H1 (cell line): ENCODE measurements at regions of chr10 and their contacts with region 1.

Region 1: GRCh38 chr10:72692057-72692910 is at the start of gene MCU:
- DNase-seq: peak; percentile 79 to 90
- H3K4me3 ChIP-seq: peak within 1 kb of the TSS; percentile 83 to 96 (median 90)
- H3K27ac ChIP-seq: peak within 1 kb of the TSS; percentile 69; the same call in 1 of the 2 replicates
- H3K4me1 ChIP-seq: peaks cover 0 to 3% (median 0%) of the 10 kb centered on the region in 4 experiments; a peak in 2 of 7 replicates
- H3K27me3 ChIP-seq: no peaks in the 10 kb centered on the region
- CTCF ChIP-seq: no peak
- EP300 ChIP-seq: no peak
- POLR2A ChIP-seq: peak; percentile 86 to 90
- RAD21 ChIP-seq: no peak
- total RNA-seq, gene MCU: 45.9 and 51.6 TPM in 2 replicates

Region 2: GRCh38 chr10:72625608-72626443 is 66.5 kb before region 1 on chr10 and contains the start of gene MICU1:
- CTCF ChIA-PET with region 1: no interaction called
- POLR2A ChIA-PET with region 1: interaction called, 10 read pairs
- DNase-seq: peak; percentile 90 to 93
- H3K4me3 ChIP-seq: peak within 1 kb of the TSS; percentile 84 to 100 (median 94)
- H3K27ac ChIP-seq: peak within 1 kb of the TSS; percentile 57; the same call in 1 of the 2 replicates
- H3K4me1 ChIP-seq: no peaks in the 10 kb centered on the region
- H3K27me3 ChIP-seq: no peaks in the 10 kb centered on the region
- CTCF ChIP-seq: no peak
- EP300 ChIP-seq: no peak
- POLR2A ChIP-seq: peak; percentile 49 to 53
- RAD21 ChIP-seq: no peak
- total RNA-seq, gene MICU1: 36.1 and 36.7 TPM in 2 replicates

Region 3: DNA sequence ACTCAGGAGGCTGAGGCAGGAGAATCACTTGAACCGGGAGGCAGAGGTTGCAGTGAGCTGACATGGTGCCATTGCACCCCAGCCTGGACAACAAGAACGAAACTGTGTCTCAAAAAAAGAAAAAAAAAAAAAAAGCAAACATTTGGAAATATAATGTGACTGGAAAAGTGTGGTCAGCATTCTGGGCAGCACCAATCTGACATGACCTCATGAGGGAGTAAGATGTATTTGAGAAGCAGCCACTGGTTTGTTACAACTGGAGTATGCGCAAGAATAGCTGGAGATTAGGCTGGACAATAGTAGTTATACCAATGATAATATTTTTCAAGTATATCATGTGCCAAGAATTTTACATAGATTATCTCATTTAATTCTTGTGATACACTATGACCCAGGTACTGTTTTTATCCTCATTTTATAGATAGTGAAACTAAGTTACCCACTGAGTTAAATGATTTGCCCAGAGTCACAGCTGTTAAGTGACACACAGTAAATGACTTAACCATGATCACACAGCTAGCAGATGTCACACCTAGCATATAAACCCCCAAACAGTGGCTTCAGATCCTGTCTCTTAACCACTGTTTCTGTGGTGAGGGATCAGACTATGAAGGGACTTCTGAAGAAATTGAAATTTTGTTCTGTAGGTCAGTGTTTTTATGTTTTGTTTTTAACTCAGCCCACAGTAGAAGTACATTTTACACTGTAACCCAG is 10.7 kb after region 1 on chr10:
- CTCF ChIA-PET with region 1: no interaction called
- POLR2A ChIA-PET with region 1: interaction called, 14 read pairs
- DNase-seq: no peak
- H3K4me3 ChIP-seq: no peak overlapping the region
- H3K27ac ChIP-seq: no peak overlapping the region
- H3K4me1 ChIP-seq: no peaks in the 10 kb centered on the region
- H3K27me3 ChIP-seq: no peaks in the 10 kb centered on the region
- CTCF ChIP-seq: no peak
- EP300 ChIP-seq: no peak
- POLR2A ChIP-seq: no peak
- RAD21 ChIP-seq: no peak

Region 4: DNA sequence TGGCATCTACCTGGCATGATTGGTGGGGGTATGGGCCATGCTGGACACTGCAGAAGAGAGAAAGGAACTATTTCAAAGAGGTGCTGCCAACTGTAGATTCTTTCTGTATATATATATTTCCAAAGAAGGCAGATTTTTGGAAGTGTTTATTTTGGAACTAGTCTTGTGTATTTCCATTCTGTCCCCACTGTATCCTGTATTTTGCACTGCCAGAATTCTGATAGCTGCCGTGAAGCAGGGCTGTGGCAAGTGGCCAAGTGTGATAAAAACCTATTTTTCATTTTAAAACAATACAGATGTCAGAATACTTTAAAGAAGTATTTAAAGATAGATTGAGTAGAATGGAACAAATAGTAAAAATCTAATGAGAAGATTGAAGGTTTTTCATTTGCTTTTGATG is 16.8 kb after region 1 on chr10:
- CTCF ChIA-PET with region 1: no interaction called
- POLR2A ChIA-PET with region 1: interaction called, 14 read pairs
- DNase-seq: no peak
- H3K4me3 ChIP-seq: no peak overlapping the region
- H3K27ac ChIP-seq: no peak overlapping the region
- H3K4me1 ChIP-seq: no peaks in the 10 kb centered on the region
- H3K27me3 ChIP-seq: no peaks in the 10 kb centered on the region
- CTCF ChIP-seq: no peak
- EP300 ChIP-seq: no peak
- POLR2A ChIP-seq: no peak
- RAD21 ChIP-seq: no peak

Region 5: GRCh38 chr10:72834183-72834825 is 142.0 kb after region 1 on chr10:
- CTCF ChIA-PET with region 1: interaction called, 6 read pairs
- POLR2A ChIA-PET with region 1: interaction called, 19 read pairs
- DNase-seq: peak in 1 of 2 experiments; percentile 1
- H3K4me3 ChIP-seq: no peak overlapping the region
- H3K27ac ChIP-seq: no peak overlapping the region
- H3K4me1 ChIP-seq: peaks cover 0 to 2% (median 0%) of the 10 kb centered on the region in 4 experiments; a peak in 1 of 7 replicates
- H3K27me3 ChIP-seq: no peaks in the 10 kb centered on the region
- CTCF ChIP-seq: peak in 2 of 3 experiments; percentile 63 to 67; a peak in 3 of 4 replicates
- EP300 ChIP-seq: no peak
- POLR2A ChIP-seq: no peak
- RAD21 ChIP-seq: peak; percentile 93

Region 6: GRCh38 chr10:72899545-72899944 is 207.3 kb after region 1 on chr10:
- CTCF ChIA-PET with region 1: no interaction called
- POLR2A ChIA-PET with region 1: no interaction called
- DNase-seq: no peak
- H3K4me3 ChIP-seq: no peak overlapping the region
- H3K27ac ChIP-seq: no peak overlapping the region
- H3K4me1 ChIP-seq: peaks cover 0 to 3% (median 0%) of the 10 kb centered on the region in 4 experiments; a peak in 2 of 7 replicates
- H3K27me3 ChIP-seq: no peaks in the 10 kb centered on the region
- CTCF ChIP-seq: no peak
- EP300 ChIP-seq: no peak
- POLR2A ChIP-seq: no peak
- RAD21 ChIP-seq: no peak